A673 (cell line): ENCODE measurements at regions of chr15 and their contacts with region 1.

Region 1: GRCh38 chr15:78182821-78183220 is 33.7 kb downstream of the IDH3A start:
- DNase-seq: no peak
- H3K4me3 ChIP-seq: no peak overlapping the region
- H3K27ac ChIP-seq: no peak overlapping the region
- H3K4me1 ChIP-seq: no peaks in the 10 kb centered on the region
- H3K27me3 ChIP-seq: no peaks in the 10 kb centered on the region
- CTCF ChIP-seq: no peak

Region 2: DNA sequence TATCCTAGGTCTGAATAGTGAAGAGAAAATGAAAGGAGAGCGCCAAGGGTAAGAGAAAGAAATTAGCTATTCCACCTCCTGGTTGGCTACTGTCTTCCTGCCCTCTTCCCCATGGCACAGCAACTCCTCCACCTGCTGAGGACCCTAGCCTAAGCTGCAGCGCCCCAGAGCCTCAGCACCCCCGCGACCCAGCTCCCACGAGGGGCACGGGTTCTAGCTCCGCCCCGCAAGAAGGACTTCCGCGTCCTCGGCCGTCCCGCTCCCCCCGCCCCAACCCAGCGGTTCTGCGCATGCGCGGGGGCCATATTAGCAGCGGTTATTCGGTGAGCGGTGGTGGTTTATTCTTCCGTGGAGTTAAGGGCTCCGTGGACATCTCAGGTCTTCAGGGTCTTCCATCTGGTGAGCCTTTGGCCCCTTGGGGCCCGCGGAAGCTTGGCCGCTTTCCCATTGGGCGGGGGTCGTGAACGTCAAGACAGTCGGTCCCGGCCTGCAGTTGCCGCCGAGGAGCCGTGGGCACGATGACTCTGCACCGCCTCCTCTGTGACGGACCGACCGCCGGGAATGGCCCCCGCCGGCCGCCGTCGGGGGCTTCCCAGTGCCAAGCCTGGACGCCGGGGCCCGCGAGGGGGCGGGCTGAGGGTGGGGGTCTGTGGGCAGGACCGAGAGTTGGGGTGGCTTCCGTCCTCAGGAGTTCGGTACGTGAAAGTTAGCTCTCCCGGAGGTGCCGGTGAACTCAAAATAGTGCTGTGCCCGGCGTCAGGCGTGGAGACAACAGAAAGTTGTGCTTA is 357.5 kb after region 1 on chr15 and contains the start of gene PSMA4:
- CTCF ChIA-PET with region 1: no interaction called
- POLR2A ChIA-PET with region 1: interaction called, 11 read pairs
- intact Hi-C with region 1: no loop called
- DNase-seq: peak; percentile 94
- H3K4me3 ChIP-seq: peak within 1 kb of the TSS; percentile 92
- H3K27ac ChIP-seq: peak within 1 kb of the TSS; percentile 99
- H3K4me1 ChIP-seq: peaks cover 6% of the 10 kb centered on the region
- H3K27me3 ChIP-seq: no peaks in the 10 kb centered on the region
- CTCF ChIP-seq: no peak
- total RNA-seq, gene PSMA4: 411 and 444 TPM in 2 replicates